Endothelial cell of umbilical vein (primary cell): ENCODE measurements at regions of chr6 and their contacts with region 1.

Region 1: DNA sequence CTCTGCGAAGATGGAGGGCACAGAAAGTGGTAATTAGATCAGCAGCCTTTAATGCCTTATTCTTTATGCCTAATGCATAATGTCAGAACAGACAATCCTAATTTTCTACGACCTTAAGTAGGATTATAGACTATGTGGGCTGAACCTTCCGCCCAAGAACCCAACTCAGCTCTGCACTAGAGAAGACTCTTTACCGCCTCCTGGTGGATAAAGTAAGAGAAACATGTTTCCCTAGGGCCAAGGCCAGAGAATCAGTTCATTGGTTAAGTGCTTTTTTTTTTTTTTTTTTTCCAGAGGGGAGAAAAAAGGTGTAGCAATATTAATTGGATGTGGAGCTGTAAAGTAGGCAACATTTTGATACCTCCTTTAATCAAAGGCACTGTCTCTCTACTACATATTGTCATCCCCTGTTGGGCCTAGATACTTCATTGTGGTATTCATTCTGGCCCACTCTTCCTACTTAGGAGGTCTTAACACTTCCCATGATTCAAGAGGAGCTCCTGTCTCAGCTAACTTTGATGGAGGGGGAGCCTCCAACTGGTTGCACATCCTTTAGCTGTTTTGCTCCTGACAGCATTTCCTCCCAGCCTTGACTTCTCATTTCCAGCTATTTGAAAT is 124.9 kb upstream of the NRN1 start:
- DNase-seq: peak; percentile 6
- H3K4me3 ChIP-seq: no peak overlapping the region
- H3K27ac ChIP-seq: no peak overlapping the region
- H3K4me1 ChIP-seq: no peaks in the 10 kb centered on the region
- H3K27me3 ChIP-seq: no peaks in the 10 kb centered on the region
- CTCF ChIP-seq: peak in 1 of 2 donors; percentile 10
- POLR2A ChIP-seq: no peak

Region 2: DNA sequence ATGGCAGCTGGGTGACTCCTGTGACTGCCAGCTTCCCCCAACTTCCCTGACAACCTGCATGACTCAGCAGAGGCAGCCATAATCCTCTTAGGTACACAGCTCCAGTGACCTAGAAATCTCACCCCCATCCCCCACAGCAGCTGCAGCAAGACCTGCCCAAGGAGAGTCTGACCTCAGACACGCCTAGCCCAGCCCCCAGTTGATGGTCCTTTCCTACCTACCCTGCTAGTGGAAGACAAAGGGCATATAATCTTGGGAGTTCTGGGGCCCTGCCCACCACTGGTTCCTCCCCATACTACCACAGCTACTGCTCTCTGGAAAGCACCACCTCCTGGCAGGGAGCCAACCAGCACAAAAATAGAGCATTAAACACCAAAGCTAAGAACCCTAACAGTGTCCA is 98.7 kb after region 1 on chr6:
- CTCF ChIA-PET with region 1: no interaction called
- POLR2A ChIA-PET with region 1: no interaction called
- dilution Hi-C with region 1: no loop called
- intact Hi-C with region 1: loop called (anchors 10 kb)
- DNase-seq: no peak
- H3K4me3 ChIP-seq: no peak overlapping the region
- H3K27ac ChIP-seq: no peak overlapping the region
- H3K4me1 ChIP-seq: no peaks in the 10 kb centered on the region
- H3K27me3 ChIP-seq: no peaks in the 10 kb centered on the region
- CTCF ChIP-seq: no peak
- POLR2A ChIP-seq: no peak

Region 3: DNA sequence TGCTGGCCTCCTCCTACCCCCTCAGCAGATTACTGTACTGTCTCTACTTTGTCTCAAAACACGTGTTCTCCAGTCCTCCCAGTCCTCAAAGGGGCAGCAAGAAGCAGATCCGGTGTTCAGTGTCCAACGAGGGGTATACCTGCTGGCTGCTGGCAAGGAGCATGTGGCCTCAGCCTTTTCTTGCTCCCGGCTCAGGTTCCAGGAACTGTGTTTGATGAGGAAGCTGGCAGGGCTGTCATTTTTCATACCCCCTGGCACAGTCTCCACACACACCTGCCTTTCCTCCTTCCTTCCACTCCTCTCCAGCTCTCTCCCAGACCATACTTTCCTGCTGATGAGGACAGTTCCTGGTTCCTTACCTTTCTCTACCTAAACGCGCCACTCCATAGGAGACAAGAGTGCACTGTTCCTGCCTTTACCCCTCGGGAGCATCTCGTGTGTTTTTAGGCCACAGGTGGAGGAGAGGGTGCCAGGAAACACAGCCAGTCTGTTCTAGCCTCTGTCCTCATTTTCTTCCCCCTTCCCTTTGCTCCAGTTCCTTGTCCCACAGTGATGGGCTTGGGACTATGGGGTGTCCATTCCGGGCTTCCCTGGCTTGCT is 1104.2 kb after region 1 on chr6:
- CTCF ChIA-PET with region 1: no interaction called
- POLR2A ChIA-PET with region 1: no interaction called
- dilution Hi-C with region 1: no loop called
- intact Hi-C with region 1: no loop called
- DNase-seq: no peak
- H3K4me3 ChIP-seq: no peak overlapping the region
- H3K27ac ChIP-seq: no peak overlapping the region
- H3K4me1 ChIP-seq: peaks cover 9% of the 10 kb centered on the region
- H3K27me3 ChIP-seq: no peaks in the 10 kb centered on the region
- CTCF ChIP-seq: no peak
- POLR2A ChIP-seq: no peak